ENCODE measurements at regions of chrX and their contacts with region 1.

Region 1: GRCh38 chrX:68807818-68808217 is 21.0 kb upstream of the EFNB1 start:
- DNase-seq: no peak
- H3K4me3 ChIP-seq: no peak overlapping the region
- H3K27ac ChIP-seq: no peak overlapping the region
- H3K4me1 ChIP-seq: no peaks in the 10 kb centered on the region
- H3K27me3 ChIP-seq: no peaks in the 10 kb centered on the region
- CTCF ChIP-seq: peak in 2 of 4 experiments; percentile 13 to 48
- POLR2A ChIP-seq: no peak

Region 2: GRCh38 chrX:68511255-68511654 is 296.6 kb before region 1 on chrX:
- intact Hi-C with region 1: loop called (anchors 5 kb)
- DNase-seq: peak; percentile 6
- H3K4me3 ChIP-seq: no peak overlapping the region
- H3K27ac ChIP-seq: no peak overlapping the region
- H3K4me1 ChIP-seq: no peaks in the 10 kb centered on the region
- H3K27me3 ChIP-seq: no peaks in the 10 kb centered on the region
- CTCF ChIP-seq: peak in 3 of 4 experiments; percentile 37 to 65 (median 55)
- POLR2A ChIP-seq: no peak

Region 3: GRCh38 chrX:68732906-68733493 is 74.8 kb before region 1 on chrX:
- intact Hi-C with region 1: loop called (anchors 2 kb)
- DNase-seq: peak; percentile 22
- H3K4me3 ChIP-seq: no peak overlapping the region
- H3K27ac ChIP-seq: no peak overlapping the region
- H3K4me1 ChIP-seq: no peaks in the 10 kb centered on the region
- H3K27me3 ChIP-seq: no peaks in the 10 kb centered on the region
- CTCF ChIP-seq: peak; percentile 33 to 71 (median 58)
- POLR2A ChIP-seq: no peak

Region 4: DNA sequence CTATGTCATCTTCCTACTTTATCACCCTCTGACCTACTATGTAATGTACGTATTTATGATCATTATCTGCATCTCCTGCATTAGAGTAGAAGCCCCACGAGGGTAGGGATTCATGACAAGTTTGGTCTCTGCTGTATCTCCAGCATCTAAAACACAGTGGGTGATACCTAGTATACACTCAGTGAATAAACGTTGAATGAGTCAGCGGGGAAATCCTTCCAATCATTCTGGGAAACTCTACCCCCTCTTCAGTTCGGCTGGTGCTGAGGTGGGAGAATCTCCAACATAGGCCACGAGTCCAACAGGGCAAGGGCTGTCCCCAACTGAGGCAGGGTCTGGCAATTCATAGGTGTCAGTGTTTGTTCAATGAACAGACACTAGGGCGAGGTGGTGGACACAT is 53.4 kb before region 1 on chrX:
- intact Hi-C with region 1: loop called (anchors 5 kb)
- DNase-seq: no peak
- H3K4me3 ChIP-seq: no peak overlapping the region
- H3K27ac ChIP-seq: no peak overlapping the region
- H3K4me1 ChIP-seq: no peaks in the 10 kb centered on the region
- H3K27me3 ChIP-seq: no peaks in the 10 kb centered on the region
- CTCF ChIP-seq: no peak
- POLR2A ChIP-seq: no peak

Region 5: GRCh38 chrX:69045616-69046345 is 238.0 kb after region 1 on chrX:
- intact Hi-C with region 1: no loop called
- DNase-seq: no peak
- H3K4me3 ChIP-seq: no peak overlapping the region
- H3K27ac ChIP-seq: no peak overlapping the region
- H3K4me1 ChIP-seq: no peaks in the 10 kb centered on the region
- H3K27me3 ChIP-seq: no peaks in the 10 kb centered on the region
- CTCF ChIP-seq: no peak
- POLR2A ChIP-seq: no peak